Cardiac septum (tissue), 1 donor: ENCODE measurements at regions of chr15 and their contacts with region 1.

Region 1: GRCh38 chr15:68543165-68544008 is 35.4 kb upstream of the CORO2B start:
- DNase-seq: peak; percentile 77

Region 2: DNA sequence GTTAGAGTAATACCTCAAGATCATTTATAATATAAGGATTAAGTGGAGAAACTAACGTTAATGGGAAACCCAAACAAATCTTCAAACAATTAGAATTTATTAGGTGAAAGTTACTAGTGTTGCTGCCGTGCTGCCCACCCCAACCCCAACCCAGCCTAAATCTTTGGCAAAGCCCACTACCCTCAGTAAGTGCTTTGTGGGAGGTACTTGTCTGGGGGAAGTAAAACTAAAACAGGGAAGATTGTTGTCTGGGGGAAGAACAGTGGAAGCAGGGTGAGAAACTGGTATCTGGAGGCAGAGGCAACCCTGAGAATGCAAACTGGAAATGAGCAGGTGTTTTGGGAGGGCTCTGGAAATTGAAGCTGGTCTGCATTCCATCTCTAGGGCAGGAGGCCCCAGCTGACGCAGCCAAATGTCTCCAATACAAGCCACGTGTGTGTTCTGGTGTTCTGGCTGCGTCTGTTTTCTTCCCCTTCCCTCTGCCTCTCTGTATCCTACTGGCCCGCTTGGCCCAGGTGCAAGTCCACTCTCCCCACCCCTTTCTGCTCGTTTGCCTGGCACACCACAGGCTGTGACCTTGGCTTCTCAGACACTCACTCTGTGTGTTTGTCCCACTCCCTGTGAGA is 233.1 kb before region 1 on chr15:
- intact Hi-C with region 1: loop called (anchors 2 kb)
- DNase-seq: no peak

Region 3: DNA sequence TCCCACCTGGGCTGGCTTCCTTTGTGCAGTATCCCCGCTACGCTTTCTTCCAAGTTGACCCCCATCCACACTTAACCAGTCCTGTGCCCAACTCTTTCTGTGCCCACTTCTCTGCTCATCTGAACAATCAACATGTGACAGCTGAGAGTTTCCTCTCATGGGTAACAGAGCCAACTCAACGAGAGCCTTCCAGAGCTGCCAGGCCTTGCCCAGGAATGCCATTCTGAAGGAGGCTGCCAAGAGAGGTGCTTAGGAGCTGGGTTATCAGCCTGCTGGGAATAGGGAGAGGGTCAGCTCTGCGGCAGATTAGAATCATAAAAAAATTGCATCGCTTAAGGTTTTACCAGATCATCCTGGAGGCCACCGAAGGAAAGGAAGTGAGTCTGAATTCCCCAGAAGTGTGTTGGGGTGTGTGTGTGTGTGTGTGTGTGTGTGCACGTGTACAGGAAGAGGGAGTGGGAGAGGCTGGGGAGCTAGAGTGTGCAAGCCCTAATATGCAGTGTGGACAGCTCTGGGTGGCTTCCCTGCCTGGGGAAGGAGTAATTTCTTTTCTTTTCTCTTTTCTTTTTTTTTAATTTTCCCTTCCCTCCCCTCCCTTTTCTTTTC is 178.1 kb before region 1 on chr15:
- intact Hi-C with region 1: loop called (anchors 10 kb)
- DNase-seq: no peak

Region 4: DNA sequence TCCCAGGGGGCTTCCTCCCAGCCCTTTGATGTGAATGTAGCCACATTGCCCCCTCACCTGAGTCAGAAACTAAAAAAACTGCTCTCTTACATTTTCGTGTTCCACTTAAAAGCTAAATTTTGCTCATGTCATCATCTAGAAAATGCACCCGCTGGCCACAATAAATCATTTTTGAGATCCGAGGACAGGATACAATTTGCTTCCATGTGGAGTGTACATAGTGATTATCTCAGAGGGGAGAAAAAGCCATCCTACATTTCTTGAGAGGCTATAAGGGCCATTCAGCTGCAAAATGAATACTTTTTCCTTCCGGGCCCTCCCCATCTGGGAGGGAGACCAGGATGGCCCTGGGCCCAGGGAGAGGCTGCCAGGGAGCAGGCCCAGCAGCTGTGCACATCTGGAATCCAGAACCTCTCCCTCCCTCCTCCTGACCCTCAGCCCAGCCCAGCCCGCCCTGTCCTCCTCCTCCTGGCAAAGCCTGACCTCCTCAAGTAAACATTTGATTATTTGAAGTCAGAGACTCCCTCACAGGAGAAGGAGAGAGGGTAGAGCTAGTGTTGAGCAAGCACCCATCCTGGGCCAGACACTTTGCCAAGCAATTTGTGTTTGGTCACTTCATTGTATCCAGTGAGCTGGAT is 94.5 kb after region 1 on chr15:
- intact Hi-C with region 1: no loop called
- DNase-seq: no peak